Activated naive CD4-positive, alpha-beta T cell treated with anti-CD3 and anti-CD28 coated beads for 36 hours (primary cell): ENCODE measurements at regions of chr14 and their contacts with region 1.

Region 1: DNA sequence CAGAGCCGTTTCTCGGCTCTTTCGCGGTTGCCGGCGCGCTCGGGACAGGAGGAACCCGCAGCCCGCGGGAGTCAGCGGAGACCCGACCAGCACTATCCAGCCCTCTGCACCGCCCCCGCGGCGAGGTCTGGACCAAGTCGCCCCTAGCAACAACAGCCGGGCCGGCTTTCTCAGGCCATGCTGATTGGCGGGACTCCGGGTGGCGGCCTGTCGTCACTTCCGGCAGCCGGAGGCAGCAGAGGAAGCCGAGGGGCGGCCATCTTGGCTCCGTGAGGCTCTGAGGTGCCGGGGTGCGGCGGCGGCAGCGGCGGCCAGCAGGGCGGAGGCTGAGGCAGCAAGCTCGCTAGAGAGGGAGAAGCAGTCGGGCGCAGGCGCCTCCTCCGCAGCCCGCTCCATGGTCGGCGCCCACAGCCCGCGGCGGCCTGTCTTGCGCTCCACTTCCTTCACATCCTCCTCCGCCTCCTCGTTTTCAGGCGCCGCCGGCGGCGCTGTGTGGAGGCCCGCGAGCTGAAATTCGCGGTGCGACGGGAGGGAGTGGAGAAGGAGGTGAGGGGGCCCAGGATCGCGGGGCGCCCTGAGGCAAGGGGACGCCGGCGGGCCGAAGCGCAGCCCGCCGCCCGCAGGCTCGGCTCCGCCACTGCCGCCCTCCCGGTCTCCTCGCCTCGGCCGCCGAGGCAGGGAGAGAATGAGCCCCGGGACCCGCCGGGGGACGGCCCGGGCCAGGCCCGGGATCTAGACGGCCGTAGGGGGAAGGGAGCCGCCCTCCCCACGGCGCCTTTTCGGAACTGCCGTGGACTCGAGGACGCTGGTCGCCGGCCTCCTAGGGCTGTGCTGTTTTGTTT is at the start of gene MARK3:
- DNase-seq: peak; percentile 97
- H3K4me3 Mint-ChIP-seq: peak within 1 kb of the TSS; percentile 96
- H3K27ac Mint-ChIP-seq: peak within 1 kb of the TSS; percentile 94
- H3K4me1 Mint-ChIP-seq: peaks cover 42% of the 10 kb centered on the region
- H3K27me3 Mint-ChIP-seq: peaks cover 4% of the 10 kb centered on the region
- total RNA-seq, gene MARK3: 62.2 to 64.7 TPM

Region 2: GRCh38 chr14:103198131-103199105 is 187.0 kb before region 1 on chr14:
- CTCF ChIA-PET with region 1: no interaction called
- intact Hi-C with region 1: no loop called
- DNase-seq: no peak
- H3K4me3 Mint-ChIP-seq: no peak overlapping the region
- H3K27ac Mint-ChIP-seq: no peak overlapping the region
- H3K4me1 Mint-ChIP-seq: no peaks in the 10 kb centered on the region
- H3K27me3 Mint-ChIP-seq: peaks cover 9% of the 10 kb centered on the region

Region 3: DNA sequence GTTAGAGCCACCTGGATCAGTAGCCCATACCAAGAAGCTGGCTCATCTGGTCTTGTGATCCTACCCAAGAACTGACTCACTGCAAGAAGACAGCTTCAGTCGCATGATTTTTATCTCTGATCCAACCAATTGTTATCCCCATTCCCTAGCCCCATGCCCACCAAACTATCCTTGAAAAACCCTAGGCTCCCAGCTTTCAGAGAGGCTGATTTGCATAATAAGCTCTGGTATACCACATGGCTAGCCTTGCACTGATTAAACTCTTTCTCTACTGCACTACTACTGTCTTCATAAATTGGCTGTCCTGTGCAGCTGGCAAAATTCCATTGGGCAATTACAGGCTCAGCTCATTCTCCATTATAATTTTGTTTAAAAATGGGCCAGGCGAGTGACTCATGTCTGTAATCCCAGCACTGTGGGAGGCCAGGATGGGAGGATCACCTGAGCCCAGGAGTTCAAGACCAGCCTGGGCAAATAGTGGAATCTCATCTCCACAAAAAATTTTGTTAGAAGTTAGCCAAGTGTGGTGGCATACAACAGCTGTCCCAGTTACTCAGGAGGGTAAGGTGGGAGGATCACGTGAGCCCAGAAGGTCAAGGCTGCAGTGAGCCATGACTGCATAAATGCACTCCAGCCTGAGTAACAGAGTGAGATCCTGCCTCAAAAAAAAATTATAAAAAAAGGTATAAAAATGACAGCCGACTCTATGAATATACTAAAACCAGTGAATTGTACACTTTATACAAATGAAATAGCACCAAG is 128.0 kb before region 1 on chr14:
- CTCF ChIA-PET with region 1: no interaction called
- intact Hi-C with region 1: no loop called
- DNase-seq: no peak
- H3K4me3 Mint-ChIP-seq: no peak overlapping the region
- H3K27ac Mint-ChIP-seq: no peak overlapping the region
- H3K4me1 Mint-ChIP-seq: peaks cover 7% of the 10 kb centered on the region
- H3K27me3 Mint-ChIP-seq: peaks cover 4% of the 10 kb centered on the region

Region 4: DNA sequence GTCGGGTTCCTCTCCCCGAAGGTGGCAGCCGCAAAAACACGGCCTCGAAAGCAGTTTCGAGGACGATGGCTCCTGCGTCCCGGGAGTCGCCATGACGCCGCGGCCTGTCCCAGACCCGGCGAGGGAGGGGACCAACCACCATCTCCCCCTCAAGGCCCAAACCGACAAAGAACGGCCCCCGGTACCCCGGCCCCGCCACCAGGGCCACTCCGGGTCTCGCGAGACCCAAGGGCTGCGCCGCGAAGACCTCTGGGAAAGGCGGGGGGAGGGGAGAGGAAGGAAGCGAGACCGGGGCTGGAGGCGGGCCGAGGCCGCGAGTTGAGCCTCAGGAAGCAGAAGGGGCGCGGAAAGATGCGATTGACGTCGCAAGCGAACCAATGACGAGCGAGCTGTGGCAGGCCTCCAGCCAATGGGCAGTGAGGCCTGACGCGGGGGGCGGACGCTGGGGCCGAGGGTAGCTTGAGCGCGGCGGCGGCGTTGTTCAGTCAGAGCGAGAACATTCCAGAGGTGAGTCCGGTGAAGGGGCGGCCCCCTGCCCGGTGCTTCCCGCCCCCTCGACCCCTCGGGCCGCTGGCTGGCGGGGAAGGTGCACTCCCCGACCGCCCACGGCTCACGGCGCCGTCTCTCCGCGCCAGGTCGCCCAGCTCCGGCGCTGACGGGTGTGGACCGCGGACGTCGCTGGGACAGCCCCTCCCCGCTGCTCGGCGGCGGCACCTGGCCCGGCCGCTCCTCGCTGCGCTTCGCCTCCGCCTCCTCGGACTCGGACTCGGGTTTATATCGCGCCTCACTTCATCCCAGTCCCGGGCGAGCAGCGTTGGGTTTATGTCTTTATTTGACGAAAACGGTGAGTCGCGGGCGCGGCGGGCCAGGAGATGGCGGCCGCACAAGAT is 51.4 kb before region 1 on chr14 and contains the start of gene EIF5:
- CTCF ChIA-PET with region 1: interaction called, 4 read pairs
- intact Hi-C with region 1: loop called (anchors 1 kb)
- DNase-seq: peak; percentile 99
- H3K4me3 Mint-ChIP-seq: peak within 1 kb of the TSS; percentile 85
- H3K27ac Mint-ChIP-seq: peak within 1 kb of the TSS; percentile 95
- H3K4me1 Mint-ChIP-seq: peaks cover 51% of the 10 kb centered on the region
- H3K27me3 Mint-ChIP-seq: no peaks in the 10 kb centered on the region
- total RNA-seq, gene EIF5: 117 to 121 TPM

Region 5: DNA sequence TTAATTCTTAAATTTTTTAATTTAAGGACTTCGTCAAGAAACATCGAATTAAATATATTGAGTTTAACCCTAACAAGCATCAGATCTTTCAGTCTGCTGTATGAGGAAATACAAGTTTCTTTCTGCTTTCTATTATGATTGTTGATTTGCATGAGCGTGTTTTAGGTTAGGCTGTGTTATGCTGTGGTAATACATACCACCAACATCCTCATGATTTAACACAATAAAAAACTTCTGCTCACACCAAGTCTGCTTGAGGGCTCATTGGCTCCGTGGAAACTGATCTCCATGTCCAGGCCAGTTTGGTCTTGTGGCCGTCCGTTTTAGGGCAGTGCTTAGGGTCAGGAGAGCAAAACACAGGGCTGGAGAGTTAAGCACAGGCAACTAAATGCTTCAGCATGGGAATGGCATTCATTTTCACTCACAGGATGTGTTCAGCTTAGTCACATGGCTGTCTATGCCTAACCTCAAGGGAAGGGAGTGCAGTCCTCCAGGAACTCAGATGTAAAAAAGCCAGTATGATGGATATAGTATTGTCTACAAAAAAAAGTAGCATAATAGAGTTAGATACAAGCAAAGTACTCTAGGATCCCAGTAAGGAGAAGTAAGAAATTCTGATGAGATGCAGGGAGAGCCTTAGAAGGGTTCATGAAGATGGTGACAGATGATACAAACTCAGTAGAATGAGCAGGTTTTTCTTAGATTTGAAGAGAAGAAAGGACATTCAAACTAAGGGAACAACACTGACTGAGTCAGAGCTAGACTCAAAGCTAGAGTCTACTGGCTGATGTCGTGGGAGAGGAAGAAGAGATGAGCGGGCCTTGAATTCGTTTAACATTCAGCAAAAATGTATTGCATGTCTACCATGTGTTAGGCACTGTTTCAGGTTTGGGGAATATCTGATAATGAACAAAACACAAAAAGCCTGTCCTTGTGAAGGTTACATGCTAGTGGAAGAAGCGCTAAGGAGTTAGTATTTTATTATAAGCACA is 16.1 kb after region 1 on chr14:
- CTCF ChIA-PET with region 1: interaction called, 15 read pairs
- intact Hi-C with region 1: loop called (anchors 2 kb)
- DNase-seq: peak; percentile 36
- H3K4me3 Mint-ChIP-seq: no peak overlapping the region
- H3K27ac Mint-ChIP-seq: peak overlapping the region; percentile 59
- H3K4me1 Mint-ChIP-seq: peaks cover 65% of the 10 kb centered on the region
- H3K27me3 Mint-ChIP-seq: no peaks in the 10 kb centered on the region

Region 6: DNA sequence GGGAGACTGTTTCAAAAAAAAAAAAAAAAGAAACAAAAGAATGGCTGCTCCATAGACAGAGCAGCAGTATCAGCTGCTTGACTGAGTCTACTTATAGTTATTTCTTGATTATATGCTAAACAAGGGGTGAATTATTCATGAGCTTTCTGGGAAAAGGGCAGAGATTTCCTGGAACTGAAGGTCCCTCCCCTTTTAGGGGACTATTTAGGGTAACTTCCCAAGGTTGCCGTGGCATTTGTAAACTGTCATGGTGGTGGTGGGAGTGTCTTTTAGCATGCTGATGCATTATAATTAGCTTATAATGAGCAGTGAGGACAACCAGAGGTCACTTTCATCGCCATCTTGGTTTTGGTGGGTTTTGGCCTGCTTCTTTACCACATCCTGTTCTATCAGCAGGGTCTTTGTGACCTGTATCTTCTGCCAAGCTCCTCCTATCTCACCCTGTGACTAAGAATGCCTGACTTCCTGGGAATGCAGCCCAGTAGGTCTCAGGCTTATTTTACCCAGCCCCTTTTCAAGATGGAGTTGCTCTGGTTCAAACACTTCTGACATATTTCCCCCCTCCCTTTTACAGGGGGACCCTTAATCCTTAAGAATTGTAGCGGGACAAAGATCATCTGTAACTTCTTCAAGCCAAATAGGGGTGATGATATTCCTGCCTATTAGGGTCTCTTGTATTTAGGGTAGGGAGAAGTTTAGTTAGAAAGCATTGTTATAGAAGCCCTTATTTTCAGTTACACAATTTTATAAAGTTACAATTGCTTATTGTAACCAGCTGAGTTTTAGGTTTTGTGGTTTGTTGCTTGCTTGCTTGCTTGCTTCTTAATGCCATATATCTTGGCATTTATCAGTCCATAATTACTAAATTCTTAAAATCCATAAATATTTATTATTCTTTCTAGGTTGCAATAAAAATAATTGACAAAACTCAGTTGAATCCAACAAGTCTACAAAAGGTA is 42.4 kb after region 1 on chr14:
- CTCF ChIA-PET with region 1: interaction called, 9 read pairs
- intact Hi-C with region 1: loop called (anchors 2 kb)
- DNase-seq: peak; percentile 67
- H3K4me3 Mint-ChIP-seq: no peak overlapping the region
- H3K27ac Mint-ChIP-seq: peak overlapping the region; percentile 78
- H3K4me1 Mint-ChIP-seq: peaks cover 56% of the 10 kb centered on the region
- H3K27me3 Mint-ChIP-seq: no peaks in the 10 kb centered on the region

Region 7: DNA sequence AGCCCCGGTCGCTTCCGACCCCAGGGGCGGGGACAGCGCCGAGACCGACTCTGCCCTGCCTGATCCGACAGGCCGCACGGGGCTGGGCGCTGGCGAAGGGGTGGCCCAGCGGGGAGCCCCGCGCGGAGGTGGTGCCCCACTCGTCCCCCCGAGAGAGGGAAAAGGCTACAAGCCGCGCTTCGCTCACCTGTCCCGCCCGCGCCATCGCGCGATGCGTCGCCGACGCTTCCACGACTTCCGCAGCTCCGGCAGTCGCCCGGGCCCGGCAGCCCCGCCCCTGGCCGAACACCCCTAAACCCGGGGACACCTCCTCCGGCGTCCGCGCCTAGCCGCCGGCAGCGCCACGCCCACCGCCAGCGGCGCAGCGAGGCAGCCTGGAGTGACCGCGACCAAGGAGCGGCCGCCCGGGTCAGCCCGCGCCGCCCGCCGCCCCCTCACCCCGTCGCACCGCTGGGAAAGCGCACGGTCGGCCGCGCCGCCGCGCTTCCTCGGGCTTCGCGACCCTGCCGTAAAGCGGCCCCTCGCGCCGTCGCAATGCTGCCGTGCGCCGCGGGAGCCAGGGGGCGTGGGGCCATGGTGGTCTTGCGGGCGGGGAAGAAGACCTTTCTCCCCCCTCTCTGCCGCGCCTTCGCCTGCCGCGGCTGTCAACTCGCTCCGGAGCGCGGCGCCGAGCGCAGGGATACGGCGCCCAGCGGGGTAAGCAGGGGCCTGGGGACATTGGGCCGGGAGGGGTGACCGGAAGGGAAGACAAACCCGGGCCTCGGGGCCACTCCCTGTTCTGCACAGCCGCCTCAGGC is 177.3 kb after region 1 on chr14 and contains the starts of genes BAG5 and COA8:
- CTCF ChIA-PET with region 1: no interaction called
- intact Hi-C with region 1: loop called (anchors 5 kb)
- DNase-seq: peak; percentile 90
- H3K4me3 Mint-ChIP-seq: peak within 1 kb of the TSS; percentile 89
- H3K27ac Mint-ChIP-seq: peak within 1 kb of the TSS; percentile 91
- H3K4me1 Mint-ChIP-seq: peaks cover 65% of the 10 kb centered on the region
- H3K27me3 Mint-ChIP-seq: no peaks in the 10 kb centered on the region
- total RNA-seq, gene BAG5: 15.5 to 16.6 TPM
- total RNA-seq, gene COA8: 36.8 to 48.4 TPM

Region 8: DNA sequence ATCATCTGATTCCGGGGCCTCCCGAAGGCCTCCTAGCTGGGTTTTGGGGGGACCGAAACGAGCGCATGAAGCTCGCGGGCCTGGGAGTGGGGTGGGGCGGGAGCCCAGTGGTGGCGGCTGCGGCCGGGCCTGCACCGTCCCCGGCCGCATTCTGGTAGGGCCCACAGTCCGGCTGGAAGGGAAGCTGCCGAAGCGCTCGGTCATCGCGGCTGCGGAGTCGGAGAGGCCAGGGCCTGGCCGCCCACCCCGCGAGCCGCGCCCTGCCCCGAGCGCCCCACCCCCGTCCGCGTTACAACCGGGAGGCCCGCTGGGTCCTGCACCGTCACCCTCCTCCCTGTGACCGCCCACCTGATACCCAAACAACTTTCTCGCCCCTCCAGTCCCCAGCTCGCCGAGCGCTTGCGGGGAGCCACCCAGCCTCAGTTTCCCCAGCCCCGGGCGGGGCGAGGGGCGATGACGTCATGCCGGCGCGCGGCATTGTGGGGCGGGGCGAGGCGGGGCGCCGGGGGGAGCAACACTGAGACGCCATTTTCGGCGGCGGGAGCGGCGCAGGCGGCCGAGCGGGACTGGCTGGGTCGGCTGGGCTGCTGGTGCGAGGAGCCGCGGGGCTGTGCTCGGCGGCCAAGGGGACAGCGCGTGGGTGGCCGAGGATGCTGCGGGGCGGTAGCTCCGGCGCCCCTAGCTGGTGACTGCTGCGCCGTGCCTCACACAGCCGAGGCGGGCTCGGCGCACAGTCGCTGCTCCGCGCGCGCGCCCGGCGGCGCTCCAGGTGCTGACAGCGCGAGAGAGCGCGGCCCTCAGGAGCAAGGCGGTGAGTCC is 243.5 kb after region 1 on chr14 and contains the start of gene KLC1:
- CTCF ChIA-PET with region 1: no interaction called
- intact Hi-C with region 1: loop called (anchors 10 kb)
- DNase-seq: peak; percentile 85
- H3K4me3 Mint-ChIP-seq: peak within 1 kb of the TSS; percentile 86
- H3K27ac Mint-ChIP-seq: peak within 1 kb of the TSS; percentile 80
- H3K4me1 Mint-ChIP-seq: peaks cover 40% of the 10 kb centered on the region
- H3K27me3 Mint-ChIP-seq: no peaks in the 10 kb centered on the region
- total RNA-seq, gene KLC1: 94.8 to 101 TPM

Region 9: GRCh38 chr14:103920981-103921854 is 535.8 kb after region 1 on chr14:
- CTCF ChIA-PET with region 1: no interaction called
- intact Hi-C with region 1: no loop called
- DNase-seq: peak; percentile 94
- H3K4me3 Mint-ChIP-seq: peak overlapping the region; percentile 89
- H3K27ac Mint-ChIP-seq: peak overlapping the region; percentile 22
- H3K4me1 Mint-ChIP-seq: peaks cover 21% of the 10 kb centered on the region
- H3K27me3 Mint-ChIP-seq: no peaks in the 10 kb centered on the region